Activated T-helper 2 cell treated with anti-CD3 and anti-CD28 coated beads, Interferon-gamma antibody, Interleukin-2, Interleukin-4, amounts not matched to agents 10 μg/mL and 5 μg/mL and 100 μg/mL, durations not matched to agents 14 hours and 24 hours and 36 hours (primary cell): ENCODE measurements at regions of chr9 and their contacts with region 1.

Region 1: GRCh38 chr9:99184475-99185347 is 37.0 kb downstream of the ALG2 start:
- DNase-seq: peak; percentile 62
- H3K4me3 Mint-ChIP-seq: no peak overlapping the region
- H3K27ac Mint-ChIP-seq: peak overlapping the region; percentile 79
- H3K4me1 Mint-ChIP-seq: peaks cover 50% of the 10 kb centered on the region
- H3K27me3 Mint-ChIP-seq: peaks cover 10% of the 10 kb centered on the region

Region 2: GRCh38 chr9:98916660-98917059 is 268.1 kb before region 1 on chr9:
- intact Hi-C with region 1: no loop called
- DNase-seq: no peak
- H3K4me3 Mint-ChIP-seq: no peak overlapping the region
- H3K27ac Mint-ChIP-seq: no peak overlapping the region
- H3K4me1 Mint-ChIP-seq: no peaks in the 10 kb centered on the region
- H3K27me3 Mint-ChIP-seq: peaks cover 9% of the 10 kb centered on the region

Region 3: DNA sequence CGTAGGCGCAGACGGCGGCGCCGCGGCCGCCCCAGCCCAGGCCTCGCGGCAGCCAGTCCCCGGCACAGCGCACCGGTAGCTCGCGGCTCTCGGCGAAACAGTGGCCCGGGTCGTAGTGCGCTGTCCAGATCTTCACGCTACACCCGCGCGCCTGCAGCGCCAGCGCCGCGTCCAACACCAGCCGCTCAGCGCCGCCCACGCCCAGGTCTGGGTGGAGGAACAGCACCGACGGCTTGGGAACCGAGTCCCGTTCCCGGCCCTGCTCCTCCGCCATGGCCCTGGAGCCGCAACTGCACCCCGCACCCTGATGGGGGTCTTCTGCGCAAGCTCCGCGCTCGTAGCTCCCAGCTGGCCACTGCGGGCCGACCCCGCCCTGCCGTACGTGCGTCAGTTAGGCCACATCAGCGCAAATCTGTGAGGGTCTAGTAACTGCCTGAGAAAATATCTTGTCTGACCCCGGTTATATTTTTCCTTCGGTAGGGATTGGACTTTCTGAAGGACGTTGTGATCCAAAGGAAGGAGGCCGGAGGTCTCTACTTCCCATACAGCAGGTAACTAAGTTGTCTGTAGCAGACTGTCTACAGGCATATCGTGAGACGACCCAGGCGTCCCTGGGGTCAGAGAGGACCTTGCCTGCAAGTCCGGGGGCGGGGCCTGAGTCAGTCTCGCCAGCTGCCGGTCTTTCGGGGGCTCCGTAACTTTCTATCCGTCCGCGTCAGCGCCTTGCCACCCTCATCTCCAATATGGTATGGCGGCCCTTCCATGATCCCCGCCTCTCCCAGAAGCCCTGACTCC is 37.1 kb after region 1 on chr9 and contains the starts of genes ALG2 and SEC61B:
- intact Hi-C with region 1: loop called (anchors 1 kb)
- DNase-seq: peak; percentile 88
- H3K4me3 Mint-ChIP-seq: peak within 1 kb of the TSS; percentile 93
- H3K27ac Mint-ChIP-seq: peak within 1 kb of the TSS; percentile 100
- H3K4me1 Mint-ChIP-seq: peaks cover 51% of the 10 kb centered on the region
- H3K27me3 Mint-ChIP-seq: no peaks in the 10 kb centered on the region
- total RNA-seq, gene ALG2: 39.5 and 41.7 TPM in 2 replicates
- total RNA-seq, gene SEC61B: 208 and 223 TPM in 2 replicates

Region 4: GRCh38 chr9:99389087-99390005 is 204.6 kb after region 1 on chr9:
- intact Hi-C with region 1: no loop called
- DNase-seq: no peak
- H3K4me3 Mint-ChIP-seq: no peak overlapping the region
- H3K27ac Mint-ChIP-seq: no peak overlapping the region
- H3K4me1 Mint-ChIP-seq: no peaks in the 10 kb centered on the region
- H3K27me3 Mint-ChIP-seq: peaks cover 5% of the 10 kb centered on the region

Region 5: DNA sequence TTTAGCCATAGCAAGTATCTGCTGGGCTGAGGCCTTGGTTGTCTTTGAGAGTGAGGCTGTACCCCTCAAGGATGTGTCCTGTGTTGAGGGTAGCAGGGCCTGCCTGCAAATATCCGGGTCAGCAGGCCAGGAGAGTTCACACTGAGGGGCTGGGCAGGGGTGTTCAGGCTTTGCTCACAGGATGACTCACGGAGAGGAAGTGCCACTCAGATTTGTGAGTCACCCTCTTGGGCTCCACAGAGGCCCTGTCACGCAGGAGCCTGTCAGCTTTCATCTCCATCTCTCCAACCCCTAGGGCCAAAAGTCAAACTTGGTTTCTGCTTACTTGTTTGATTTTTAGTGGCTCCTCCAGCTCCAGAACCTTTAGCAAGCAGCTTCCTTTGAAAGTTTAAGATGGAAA is 248.8 kb after region 1 on chr9:
- intact Hi-C with region 1: loop called (anchors 10 kb)
- DNase-seq: peak; percentile 54
- H3K4me3 Mint-ChIP-seq: no peak overlapping the region
- H3K27ac Mint-ChIP-seq: peak overlapping the region; percentile 61
- H3K4me1 Mint-ChIP-seq: peaks cover 36% of the 10 kb centered on the region
- H3K27me3 Mint-ChIP-seq: no peaks in the 10 kb centered on the region

Region 6: DNA sequence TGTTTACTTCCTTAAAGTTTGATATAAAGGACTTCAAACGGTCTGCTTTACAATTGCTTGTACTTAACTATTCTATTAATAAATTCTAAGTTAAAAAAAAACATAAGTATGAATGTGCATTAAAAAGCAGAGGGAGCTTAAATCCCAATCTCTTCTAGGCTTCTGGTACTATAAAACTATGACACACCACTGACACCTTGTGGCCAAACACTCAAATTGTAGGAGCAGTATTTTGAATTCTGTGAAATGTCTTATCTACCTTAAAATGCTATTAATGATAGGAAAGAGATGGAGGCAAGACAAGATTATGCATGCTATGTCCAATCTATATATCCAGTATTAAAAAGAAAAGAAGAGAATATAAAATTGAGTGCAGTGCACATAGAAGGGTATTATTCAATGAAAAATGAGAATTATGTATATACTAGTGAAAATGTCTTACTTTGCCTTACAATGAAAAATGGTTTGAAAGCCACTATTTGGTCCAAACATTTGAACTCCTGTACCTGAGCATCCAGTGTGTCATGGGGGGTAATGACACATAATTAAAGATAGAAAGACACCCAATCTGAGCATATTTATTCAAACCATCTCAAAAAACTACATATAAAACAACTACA is 826.5 kb after region 1 on chr9:
- intact Hi-C with region 1: loop called (anchors 2 kb)
- DNase-seq: no peak
- H3K4me3 Mint-ChIP-seq: no peak overlapping the region
- H3K27ac Mint-ChIP-seq: no peak overlapping the region
- H3K4me1 Mint-ChIP-seq: no peaks in the 10 kb centered on the region
- H3K27me3 Mint-ChIP-seq: no peaks in the 10 kb centered on the region

Region 7: GRCh38 chr9:100322954-100323536 is 1138.3 kb after region 1 on chr9:
- intact Hi-C with region 1: loop called (anchors 10 kb)
- DNase-seq: no peak
- H3K4me3 Mint-ChIP-seq: no peak overlapping the region
- H3K27ac Mint-ChIP-seq: no peak overlapping the region
- H3K4me1 Mint-ChIP-seq: peaks cover 3% of the 10 kb centered on the region
- H3K27me3 Mint-ChIP-seq: no peaks in the 10 kb centered on the region